ENCODE measurements at regions of chr10 and their contacts with region 1.

Region 1: GRCh38 chr10:88932539-88933256 is 19.9 kb downstream of the ACTA2 start:
- DNase-seq: peak; percentile 60
- H3K4me3 ChIP-seq: no peak overlapping the region
- H3K27ac ChIP-seq: peak overlapping the region; percentile 21
- H3K4me1 ChIP-seq: no peaks in the 10 kb centered on the region
- H3K27me3 ChIP-seq: no peaks in the 10 kb centered on the region
- CTCF ChIP-seq: peak; percentile 85

Region 2: DNA sequence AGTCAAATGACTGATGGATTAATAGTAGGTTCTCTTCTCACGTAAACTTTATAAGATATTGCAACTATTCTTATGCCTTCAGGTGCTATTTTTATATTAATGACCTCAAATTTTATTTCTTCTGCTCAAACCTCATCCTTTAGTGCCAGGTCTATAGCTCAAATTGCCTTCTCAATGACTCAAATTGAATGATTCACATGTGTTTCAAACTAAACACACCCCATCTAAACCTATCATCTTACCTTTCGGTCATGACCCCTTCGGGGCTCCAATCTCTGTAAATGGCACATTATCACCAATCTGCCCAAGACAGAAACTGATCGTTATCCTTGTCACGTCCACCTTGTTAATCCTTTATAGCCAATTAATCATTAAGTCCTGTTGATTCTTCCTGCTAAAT is 290.4 kb before region 1 on chr10:
- intact Hi-C with region 1: no loop called
- DNase-seq: no peak
- H3K4me3 ChIP-seq: no peak overlapping the region
- H3K27ac ChIP-seq: no peak overlapping the region
- H3K4me1 ChIP-seq: no peaks in the 10 kb centered on the region
- H3K27me3 ChIP-seq: no peaks in the 10 kb centered on the region
- CTCF ChIP-seq: no peak

Region 3: GRCh38 chr10:88810196-88810961 is 122.3 kb before region 1 on chr10:
- intact Hi-C with region 1: no loop called
- DNase-seq: peak; percentile 33
- H3K4me3 ChIP-seq: no peak overlapping the region
- H3K27ac ChIP-seq: no peak overlapping the region
- H3K4me1 ChIP-seq: no peaks in the 10 kb centered on the region
- H3K27me3 ChIP-seq: no peaks in the 10 kb centered on the region
- CTCF ChIP-seq: peak; percentile 61

Region 4: DNA sequence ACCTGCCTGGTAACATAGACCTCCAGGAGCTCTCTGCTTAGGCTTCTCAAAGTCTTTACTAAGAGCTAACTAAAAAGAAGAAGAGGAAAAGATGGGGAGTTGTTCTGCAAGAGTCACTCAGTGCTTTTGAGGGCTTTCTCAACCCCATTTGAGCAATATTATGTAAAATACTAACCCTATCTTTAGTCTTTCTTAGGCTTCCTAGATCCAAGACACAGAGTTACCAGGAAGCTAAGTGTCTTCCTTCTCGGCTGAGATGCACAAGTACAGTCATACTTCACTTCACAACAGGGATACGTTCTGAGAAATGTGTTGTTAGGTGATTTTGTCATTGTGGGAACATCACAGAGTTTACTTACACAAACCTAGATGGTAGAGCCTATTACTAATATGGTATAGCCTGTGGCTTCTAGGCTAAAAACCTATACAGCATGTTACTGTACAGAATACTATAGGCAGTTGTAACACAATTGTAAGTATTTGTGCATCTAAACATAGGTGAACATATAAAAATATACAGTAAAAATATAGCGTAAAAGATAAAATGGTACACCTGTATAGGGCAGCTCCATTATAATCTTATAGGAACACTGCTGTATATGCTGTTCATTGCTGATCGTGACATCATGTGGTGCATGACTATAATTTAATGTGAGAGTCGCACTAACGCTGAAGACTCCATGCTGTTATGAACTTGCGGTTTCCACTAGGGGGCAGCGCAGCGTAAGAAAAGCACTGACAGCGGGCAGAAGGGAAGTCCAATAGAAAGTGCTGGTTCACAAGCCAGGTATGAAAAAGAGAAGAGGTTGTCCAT is 97.4 kb before region 1 on chr10:
- intact Hi-C with region 1: loop called (anchors 2 kb)
- DNase-seq: peak; percentile 95
- H3K4me3 ChIP-seq: no peak overlapping the region
- H3K27ac ChIP-seq: no peak overlapping the region
- H3K4me1 ChIP-seq: no peaks in the 10 kb centered on the region
- H3K27me3 ChIP-seq: no peaks in the 10 kb centered on the region
- CTCF ChIP-seq: peak; percentile 75

Region 5: DNA sequence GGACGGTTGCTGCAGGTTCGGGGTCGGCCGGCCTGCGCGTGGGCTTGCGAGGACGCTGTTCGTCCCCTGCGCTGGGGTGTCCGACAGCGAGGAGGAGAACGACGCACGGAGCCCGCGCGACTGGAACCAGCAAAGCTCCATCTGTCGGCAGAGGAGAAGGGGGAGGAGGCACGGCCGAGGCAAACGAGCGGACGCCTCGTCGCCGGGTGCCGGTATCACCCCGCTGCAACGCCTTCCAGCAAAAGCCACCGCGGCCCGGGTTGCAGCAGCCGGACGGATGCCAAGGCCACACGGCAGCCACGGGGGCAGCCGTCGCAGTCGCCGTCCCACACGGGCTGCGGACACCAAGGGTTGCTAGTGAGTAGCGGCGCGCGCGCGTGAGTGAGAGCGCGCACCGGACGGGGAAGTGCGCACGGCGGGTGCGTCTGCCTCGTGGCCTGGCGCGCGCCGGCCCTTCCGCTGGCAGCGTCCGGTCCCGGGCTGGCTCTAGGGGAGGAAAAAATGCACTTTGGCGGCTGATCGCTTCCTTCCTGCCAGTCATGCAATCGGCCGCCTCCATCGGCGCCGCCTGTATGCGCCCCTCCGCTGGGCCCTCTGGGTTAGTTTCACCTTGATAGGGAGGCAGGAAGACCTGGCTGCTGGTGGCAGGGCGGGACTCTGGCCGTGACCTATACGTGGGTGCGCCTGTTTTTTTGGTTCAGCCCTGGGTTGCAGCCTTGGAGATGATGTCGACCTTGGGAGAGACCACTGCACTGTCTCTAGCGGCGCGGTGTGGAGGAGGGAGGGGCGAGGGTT is 52.2 kb before region 1 on chr10:
- intact Hi-C with region 1: loop called (anchors 5 kb)
- DNase-seq: peak; percentile 83
- H3K4me3 ChIP-seq: peak overlapping the region; percentile 70
- H3K27ac ChIP-seq: peak overlapping the region; percentile 97
- H3K4me1 ChIP-seq: no peaks in the 10 kb centered on the region
- H3K27me3 ChIP-seq: no peaks in the 10 kb centered on the region
- CTCF ChIP-seq: no peak

Region 6: DNA sequence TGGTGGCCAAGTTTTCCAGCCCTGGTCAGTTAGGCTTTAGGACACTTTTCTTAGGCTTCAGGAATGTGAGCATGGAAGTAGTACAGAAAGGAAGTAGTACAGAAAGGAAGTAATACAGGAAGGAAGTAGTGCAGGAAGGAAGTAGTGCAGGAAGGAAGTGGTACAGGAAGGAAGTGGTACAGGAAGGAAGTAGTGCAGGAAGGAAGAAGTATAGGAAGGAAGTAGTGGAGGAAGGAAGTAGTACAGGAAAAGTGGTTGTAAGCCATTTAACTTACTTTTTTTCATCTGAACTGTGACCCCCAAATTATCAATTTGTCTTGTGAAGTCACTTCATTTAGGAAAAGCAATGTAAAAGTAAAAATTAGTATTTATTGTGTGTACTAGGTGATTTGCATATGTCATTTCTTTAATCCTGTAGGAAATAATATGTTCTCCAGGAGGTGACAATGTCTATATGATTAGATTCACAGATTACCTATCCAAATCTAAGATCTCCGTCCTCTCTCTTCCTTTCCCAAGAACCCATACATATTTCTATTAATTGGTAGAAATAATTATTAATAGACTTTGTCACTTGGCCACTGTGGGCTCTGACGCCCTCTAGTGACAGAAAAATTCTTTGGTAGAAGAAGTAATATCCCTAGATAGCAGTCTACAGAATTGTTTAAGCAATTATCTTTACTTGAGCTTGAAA is 54.0 kb after region 1 on chr10:
- intact Hi-C with region 1: loop called (anchors 5 kb)
- DNase-seq: no peak
- H3K4me3 ChIP-seq: no peak overlapping the region
- H3K27ac ChIP-seq: no peak overlapping the region
- H3K4me1 ChIP-seq: no peaks in the 10 kb centered on the region
- H3K27me3 ChIP-seq: no peaks in the 10 kb centered on the region
- CTCF ChIP-seq: peak; percentile 67

Region 7: DNA sequence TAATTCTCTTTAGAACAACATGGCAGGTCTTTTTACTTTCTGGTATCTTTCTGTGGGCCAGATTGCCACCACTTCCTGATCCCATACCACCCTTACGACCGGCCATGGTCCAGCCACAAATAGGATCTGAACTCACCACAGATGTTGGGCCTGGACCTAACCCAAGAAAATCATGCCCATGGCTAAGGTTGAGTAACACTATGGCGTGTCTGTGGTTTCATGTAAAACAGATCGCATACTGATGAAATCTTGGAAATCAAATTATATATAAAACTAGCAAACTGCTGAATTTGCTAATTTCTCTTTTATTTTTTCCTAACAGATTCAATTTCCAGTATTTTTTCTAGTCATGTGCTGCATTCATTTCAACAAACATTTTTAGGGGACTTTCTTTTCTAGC is 197.2 kb after region 1 on chr10:
- intact Hi-C with region 1: no loop called
- DNase-seq: peak; percentile 22
- H3K4me3 ChIP-seq: no peak overlapping the region
- H3K27ac ChIP-seq: no peak overlapping the region
- H3K4me1 ChIP-seq: no peaks in the 10 kb centered on the region
- H3K27me3 ChIP-seq: no peaks in the 10 kb centered on the region
- CTCF ChIP-seq: no peak

Region 8: GRCh38 chr10:89217057-89217990 is 284.6 kb after region 1 on chr10:
- intact Hi-C with region 1: loop called (anchors 2 kb)
- DNase-seq: peak; percentile 71
- H3K4me3 ChIP-seq: no peak overlapping the region
- H3K27ac ChIP-seq: no peak overlapping the region
- H3K4me1 ChIP-seq: no peaks in the 10 kb centered on the region
- H3K27me3 ChIP-seq: no peaks in the 10 kb centered on the region
- CTCF ChIP-seq: peak; percentile 73

Measured in colonic mucosa (tissue), 4 donors.